ENCODE measurements at regions of chr2 and their contacts with region 1.

Region 1: DNA sequence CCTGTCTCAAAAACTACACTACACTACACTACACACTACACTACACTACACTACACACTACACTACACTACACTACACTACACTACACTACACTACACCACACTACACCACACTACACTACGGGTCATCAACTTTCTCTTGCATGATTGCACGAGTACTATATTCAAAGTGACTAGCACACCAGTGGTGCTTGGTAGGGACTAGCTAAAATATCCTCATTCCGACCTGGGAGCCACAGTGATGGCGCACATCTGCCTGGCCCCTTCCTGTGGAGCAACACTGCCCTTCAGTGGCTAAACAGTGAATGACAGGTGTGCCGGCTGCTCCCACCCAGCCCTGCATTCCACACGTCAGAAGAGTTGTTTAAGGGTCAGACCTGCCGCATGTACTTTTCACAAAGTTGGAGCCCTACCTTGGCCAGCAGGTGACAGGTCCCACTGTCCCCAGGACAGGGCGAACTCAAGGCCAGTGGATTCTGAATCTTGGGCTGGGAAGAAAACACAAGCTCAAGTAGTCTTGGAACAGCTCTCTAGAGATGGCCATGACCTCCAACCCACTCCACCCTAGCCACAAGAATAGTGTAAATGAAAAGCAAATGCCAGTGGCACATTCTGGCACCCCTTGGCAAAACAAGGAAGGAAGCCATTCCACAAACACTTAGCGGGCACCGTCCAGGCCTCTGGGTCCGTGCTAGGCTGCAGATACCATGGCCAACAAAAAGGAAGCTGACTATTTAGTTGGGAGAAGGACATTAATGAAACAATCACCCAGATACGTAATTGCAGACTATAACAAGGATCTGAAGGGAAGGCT is 79.7 kb upstream of the MSH2 start:
- DNase-seq: no peak
- H3K4me3 ChIP-seq: no peak overlapping the region
- H3K27me3 ChIP-seq: no peaks in the 10 kb centered on the region
- CTCF ChIP-seq: peak; percentile 96

Region 2: GRCh38 chr2:46967990-46968647 is 355.1 kb before region 1 on chr2:
- CTCF ChIA-PET with region 1: interaction called, 6 read pairs
- POLR2A ChIA-PET with region 1: interaction called, 26 read pairs
- DNase-seq: peak; percentile 76
- H3K4me3 ChIP-seq: no peak overlapping the region
- H3K27me3 ChIP-seq: no peaks in the 10 kb centered on the region
- CTCF ChIP-seq: no peak

Region 3: DNA sequence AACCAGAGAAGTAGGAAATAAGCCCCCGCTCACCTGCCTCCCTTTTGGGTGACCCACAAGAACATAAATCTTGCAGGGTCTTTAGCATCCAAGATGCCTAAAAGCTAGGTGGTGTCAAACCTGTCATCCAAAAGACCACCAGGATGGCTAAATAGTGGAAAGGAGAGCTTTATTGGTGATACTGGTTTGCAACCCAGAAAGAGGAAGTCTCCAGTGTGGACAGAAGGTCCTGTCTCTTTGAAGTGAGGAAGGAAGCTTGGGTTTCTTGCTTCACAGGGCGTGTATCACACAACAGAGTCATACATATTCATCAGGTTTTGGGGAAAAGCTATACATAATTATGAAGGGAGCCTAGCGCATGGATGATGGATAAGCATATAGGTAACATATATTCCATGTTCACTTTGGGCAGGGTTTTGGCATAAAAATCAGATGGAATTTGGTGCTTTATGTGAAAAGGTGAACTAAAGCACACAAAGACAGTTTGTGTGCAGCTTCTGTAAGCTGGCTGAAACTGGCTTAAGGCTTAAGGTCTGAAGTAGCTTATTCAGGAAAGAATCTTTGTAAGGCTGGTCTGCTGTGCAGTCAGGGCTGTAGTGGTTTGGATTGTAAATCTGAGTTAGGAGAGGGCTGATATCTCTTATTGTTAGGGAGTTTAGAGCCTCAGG is 22.5 kb before region 1 on chr2:
- CTCF ChIA-PET with region 1: interaction called, 12 read pairs
- POLR2A ChIA-PET with region 1: no interaction called
- DNase-seq: no peak
- H3K4me3 ChIP-seq: no peak overlapping the region
- H3K27me3 ChIP-seq: no peaks in the 10 kb centered on the region
- CTCF ChIP-seq: no peak

Region 4: GRCh38 chr2:47334356-47335136 is 11.3 kb after region 1 on chr2:
- CTCF ChIA-PET with region 1: interaction called, 11 read pairs
- POLR2A ChIA-PET with region 1: no interaction called
- DNase-seq: no peak
- H3K4me3 ChIP-seq: no peak overlapping the region
- H3K27me3 ChIP-seq: no peaks in the 10 kb centered on the region
- CTCF ChIP-seq: no peak

Measured in BJ (cell line).